K562 (cell line): ENCODE measurements at regions of chr7 and their contacts with region 1.

Region 1: GRCh38 chr7:151244196-151244840 is 4.2 kb downstream of the SMARCD3 start:
- DNase-seq: peak; percentile 82 to 88 (median 85)
- ATAC-seq: peak; percentile 37
- H3K4me3 ChIP-seq: no peak overlapping the region
- H3K27ac ChIP-seq: no peak overlapping the region
- H3K4me1 ChIP-seq: peaks cover 31 to 63% of the 10 kb centered on the region in 2 experiments
- H3K27me3 ChIP-seq: peaks cover 0 to 20% of the 10 kb centered on the region in 2 experiments; a peak in 1 of 5 replicates
- CTCF ChIP-seq: peak; percentile 93 to 98 (median 97)
- EP300 ChIP-seq: no peak
- POLR2A ChIP-seq: no peak
- RAD21 ChIP-seq: peak; percentile 69 to 78

Region 2: DNA sequence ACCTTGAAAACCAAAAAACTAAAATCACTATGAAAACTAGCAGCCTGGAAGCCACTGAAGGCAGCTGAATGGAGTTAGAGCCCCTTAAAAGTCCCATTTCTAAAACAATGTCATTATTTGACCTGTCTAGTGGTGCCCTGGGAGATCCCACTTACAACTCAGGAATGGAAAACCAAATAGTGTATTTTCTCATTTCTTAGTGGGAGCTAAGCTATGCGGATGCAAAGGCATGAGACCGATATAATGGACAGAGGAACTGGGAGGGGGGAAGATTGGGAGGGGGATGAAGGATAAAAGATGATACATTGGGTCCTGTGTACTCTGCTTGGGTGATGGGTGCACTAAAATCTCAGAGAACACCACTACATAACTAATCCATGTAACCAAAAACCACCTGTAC is 568.6 kb before region 1 on chr7:
- CTCF ChIA-PET with region 1: no interaction called
- POLR2A ChIA-PET with region 1: no interaction called
- in situ Hi-C with region 1: no loop called
- intact Hi-C with region 1: no loop called
- DNase-seq: no peak
- ATAC-seq: no peak
- H3K4me3 ChIP-seq: no peak overlapping the region
- H3K27ac ChIP-seq: no peak overlapping the region
- H3K4me1 ChIP-seq: no peaks in the 10 kb centered on the region
- H3K27me3 ChIP-seq: no peaks in the 10 kb centered on the region; a peak in 1 of 5 replicates
- CTCF ChIP-seq: no peak
- EP300 ChIP-seq: no peak
- POLR2A ChIP-seq: no peak
- RAD21 ChIP-seq: no peak

Region 3: GRCh38 chr7:151142686-151143040 is 101.7 kb before region 1 on chr7:
- CTCF ChIA-PET with region 1: no interaction called
- POLR2A ChIA-PET with region 1: no interaction called
- in situ Hi-C with region 1: no loop called
- intact Hi-C with region 1: no loop called
- DNase-seq: no peak
- ATAC-seq: peak; percentile 14; the same call in 1 of the 3 replicates
- H3K4me3 ChIP-seq: no peak overlapping the region
- H3K27ac ChIP-seq: no peak overlapping the region
- H3K4me1 ChIP-seq: peaks cover 0 to 26% of the 10 kb centered on the region in 2 experiments; a peak in 2 of 5 replicates
- H3K27me3 ChIP-seq: no peaks in the 10 kb centered on the region; a peak in 1 of 5 replicates
- CTCF ChIP-seq: peak; percentile 19 to 34 (median 28); a peak in 3 of 6 replicates
- EP300 ChIP-seq: no peak
- POLR2A ChIP-seq: no peak
- RAD21 ChIP-seq: no peak

Region 4: DNA sequence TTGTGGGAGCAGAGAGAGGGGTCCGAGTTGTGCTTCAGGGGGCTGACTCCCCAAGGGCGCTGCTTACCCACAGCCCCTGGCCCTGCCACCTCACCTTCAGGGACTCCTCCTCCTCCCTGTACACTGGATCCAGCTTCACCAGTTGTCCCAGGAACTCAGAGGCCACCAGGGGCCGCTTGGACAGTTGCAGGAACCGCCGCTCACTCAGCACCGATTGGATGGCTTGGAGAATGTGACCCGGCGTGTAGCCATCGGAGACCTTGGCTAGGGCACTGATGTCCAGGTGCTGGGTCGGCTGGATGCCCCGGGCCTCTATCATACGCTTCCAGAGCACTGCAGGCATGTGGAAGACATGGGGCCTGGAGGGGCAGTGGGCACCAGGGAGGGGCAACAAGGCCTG is 52.8 kb before region 1 on chr7:
- CTCF ChIA-PET with region 1: interaction called, 7 read pairs
- POLR2A ChIA-PET with region 1: interaction called, 4 read pairs
- in situ Hi-C with region 1: no loop called
- intact Hi-C with region 1: loop called (anchors 5 kb)
- DNase-seq: peak in 1 of 4 experiments; percentile 36
- ATAC-seq: peak; percentile 66
- H3K4me3 ChIP-seq: no peak overlapping the region
- H3K27ac ChIP-seq: no peak overlapping the region
- H3K4me1 ChIP-seq: peaks cover 0 to 15% of the 10 kb centered on the region in 2 experiments; a peak in 2 of 5 replicates
- H3K27me3 ChIP-seq: peaks cover 75 to 86% of the 10 kb centered on the region in 2 experiments
- CTCF ChIP-seq: peak; percentile 39 to 48 (median 41); a peak in 4 of 6 replicates
- EP300 ChIP-seq: no peak
- POLR2A ChIP-seq: no peak
- RAD21 ChIP-seq: peak in 1 of 2 experiments; percentile 23; a peak in 1 of 4 replicates

Region 5: DNA sequence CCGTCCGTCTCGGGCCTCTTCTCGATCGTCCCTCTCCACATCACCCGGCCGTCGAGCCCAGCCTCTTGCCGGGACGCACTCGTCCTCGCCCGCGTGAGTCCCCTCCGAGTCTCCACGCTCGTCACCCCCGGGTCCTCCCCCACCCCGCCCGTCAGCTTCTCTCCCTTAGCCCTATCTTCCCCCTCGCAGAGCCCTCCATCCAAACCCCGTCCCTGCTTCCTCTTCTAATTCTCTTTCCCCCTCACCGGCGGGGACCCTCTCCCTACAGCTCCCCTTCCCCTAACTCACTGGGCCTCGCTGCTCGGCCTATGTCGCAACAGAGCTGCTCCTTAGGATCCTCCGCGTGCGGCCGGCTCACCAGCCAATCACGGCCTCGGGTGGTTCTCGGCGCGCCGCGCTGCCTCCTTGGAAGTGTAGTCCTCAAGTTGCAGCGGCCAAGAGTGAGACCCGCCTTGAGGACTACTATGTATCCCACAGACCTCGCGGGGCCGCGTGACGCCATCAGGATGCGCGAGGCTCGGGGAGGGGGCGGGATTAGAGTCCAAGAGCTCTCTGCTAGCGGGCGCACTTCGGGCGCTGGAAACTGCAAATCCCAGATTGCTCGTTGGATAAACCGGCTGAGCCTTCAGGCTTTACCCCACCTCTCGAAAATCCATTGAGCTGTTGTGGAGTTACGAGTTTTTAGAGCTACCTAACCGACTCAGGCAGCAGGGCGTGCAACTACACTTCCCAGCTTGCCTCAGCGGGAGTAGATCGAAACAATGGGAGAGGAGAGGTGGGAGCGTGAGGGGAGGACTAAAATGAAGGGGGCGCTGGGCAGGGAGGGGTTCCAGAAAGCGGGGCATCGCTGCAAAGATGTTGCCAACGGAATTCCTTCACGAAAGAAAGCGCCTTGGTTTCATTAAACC is 17.2 kb before region 1 on chr7 and contains the start of gene ABCF2:
- CTCF ChIA-PET with region 1: interaction called, 3 read pairs
- POLR2A ChIA-PET with region 1: interaction called, 36 read pairs
- in situ Hi-C with region 1: no loop called
- intact Hi-C with region 1: loop called (anchors 2 kb)
- DNase-seq: peak; percentile 99 to 100 (median 100)
- ATAC-seq: peak; percentile 99
- H3K4me3 ChIP-seq: peak within 1 kb of the TSS; percentile 82
- H3K27ac ChIP-seq: peak within 1 kb of the TSS; percentile 67
- H3K4me1 ChIP-seq: peaks cover 26 to 27% of the 10 kb centered on the region in 2 experiments; a peak in 4 of 5 replicates
- H3K27me3 ChIP-seq: no peaks in the 10 kb centered on the region
- CTCF ChIP-seq: peak in 1 of 3 experiments; percentile 15; a peak in 1 of 6 replicates
- EP300 ChIP-seq: peak; percentile 37
- POLR2A ChIP-seq: peak; percentile 91
- RAD21 ChIP-seq: no peak
- polyA plus RNA-seq, gene ABCF2: 103 to 224 TPM

Region 6: DNA sequence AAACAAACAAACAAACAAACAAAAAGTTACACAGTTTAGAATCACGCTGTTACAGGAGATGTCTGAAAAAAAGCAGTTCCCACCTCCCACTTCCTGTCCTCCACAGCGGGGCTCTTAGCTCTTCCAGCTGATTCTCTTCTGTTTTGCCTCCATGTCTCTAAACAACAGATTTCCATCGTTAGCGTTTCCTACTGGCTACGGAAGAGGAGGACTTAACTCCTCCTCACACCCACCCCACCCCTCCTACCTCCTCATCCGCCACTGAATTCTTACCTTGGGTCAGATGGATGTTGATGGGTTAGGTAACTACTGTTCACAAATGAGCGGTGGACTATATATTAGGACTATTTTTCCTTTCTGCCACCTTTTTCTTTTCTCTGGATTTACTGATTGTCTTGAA is 60.5 kb after region 1 on chr7:
- CTCF ChIA-PET with region 1: interaction called, 24 read pairs
- POLR2A ChIA-PET with region 1: no interaction called
- in situ Hi-C with region 1: no loop called
- intact Hi-C with region 1: loop called (anchors 2 kb)
- DNase-seq: peak in 3 of 4 experiments; percentile 16 to 24 (median 17)
- ATAC-seq: no peak
- H3K4me3 ChIP-seq: no peak overlapping the region
- H3K27ac ChIP-seq: no peak overlapping the region
- H3K4me1 ChIP-seq: peaks cover 3 to 8% of the 10 kb centered on the region in 2 experiments; a peak in 4 of 5 replicates
- H3K27me3 ChIP-seq: peaks cover 35 to 80% of the 10 kb centered on the region in 2 experiments; a peak in 4 of 5 replicates
- CTCF ChIP-seq: no peak
- EP300 ChIP-seq: no peak
- POLR2A ChIP-seq: no peak
- RAD21 ChIP-seq: no peak